ENCODE measurements at regions of chr13 and their contacts with region 1.

Region 1: GRCh38 chr13:31538067-31539042 is 201.0 kb upstream of the RXFP2 start:
- DNase-seq: peak in 1 of 2 experiments; percentile 44
- H3K4me3 ChIP-seq: no peak overlapping the region
- H3K4me3 Mint-ChIP-seq: no peak overlapping the region
- H3K27ac Mint-ChIP-seq: no peak overlapping the region
- H3K4me1 ChIP-seq: no peaks in the 10 kb centered on the region
- H3K4me1 Mint-ChIP-seq: no peaks in the 10 kb centered on the region
- H3K27me3 ChIP-seq: no peaks in the 10 kb centered on the region
- H3K27me3 Mint-ChIP-seq: no peaks in the 10 kb centered on the region
- CTCF ChIP-seq: peak; percentile 70 to 81

Region 2: DNA sequence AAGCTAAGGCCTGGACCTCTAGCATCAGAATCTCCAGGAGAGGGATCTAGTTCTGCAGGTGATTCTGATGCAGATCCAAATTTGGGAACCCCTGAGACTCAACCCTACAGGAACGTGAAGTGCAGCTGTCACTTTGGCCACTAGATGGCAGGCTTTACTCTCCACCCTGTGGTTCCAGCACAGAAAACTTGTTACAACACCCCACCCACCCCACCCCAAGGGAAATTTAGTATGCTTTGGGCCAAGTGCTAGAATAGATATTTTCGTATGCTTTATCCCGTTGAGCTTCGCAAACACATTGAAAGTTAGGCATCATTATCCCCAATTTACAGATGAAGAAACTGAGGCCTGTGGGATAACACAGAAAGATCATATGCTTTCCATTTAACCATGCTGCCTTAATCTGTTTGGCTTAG is 106.6 kb before region 1 on chr13:
- CTCF ChIA-PET with region 1: interaction called, 10 read pairs
- POLR2A ChIA-PET with region 1: no interaction called
- intact Hi-C with region 1: loop called (anchors 1 kb)
- DNase-seq: peak; percentile 63 to 67
- H3K4me3 ChIP-seq: no peak overlapping the region
- H3K4me3 Mint-ChIP-seq: no peak overlapping the region
- H3K27ac Mint-ChIP-seq: no peak overlapping the region
- H3K4me1 ChIP-seq: peaks cover 1% of the 10 kb centered on the region; the same call in 1 of the 2 replicates
- H3K4me1 Mint-ChIP-seq: peaks cover 1% of the 10 kb centered on the region
- H3K27me3 ChIP-seq: no peaks in the 10 kb centered on the region
- H3K27me3 Mint-ChIP-seq: peaks cover 3% of the 10 kb centered on the region
- CTCF ChIP-seq: peak; percentile 92 to 93

Region 3: DNA sequence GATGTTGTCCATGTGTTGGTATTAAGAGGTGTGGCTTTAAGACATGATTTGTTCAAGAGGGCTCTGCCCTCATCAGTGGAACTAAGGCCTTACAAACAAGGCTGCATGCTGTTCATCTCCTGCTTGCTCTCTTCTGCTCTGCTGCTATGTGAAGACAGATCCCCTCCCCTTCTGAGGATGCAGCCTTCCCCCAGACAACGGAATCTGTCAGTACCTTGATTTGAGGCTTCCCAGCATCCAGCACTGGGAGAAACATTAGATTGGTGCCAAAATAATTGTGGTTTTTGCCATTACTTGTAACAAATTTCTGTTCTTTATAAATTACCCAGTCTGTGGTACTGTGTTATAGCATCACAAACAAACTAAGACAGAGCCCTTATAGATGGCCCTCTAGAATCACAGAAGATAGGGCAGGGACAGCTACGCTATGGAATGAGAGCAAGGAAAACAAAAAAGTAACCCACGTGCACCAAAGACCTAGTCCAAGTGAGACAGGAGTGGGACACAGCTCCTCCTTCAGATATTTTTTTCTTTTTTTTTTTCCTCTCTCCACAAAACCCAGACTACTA is 49.4 kb after region 1 on chr13:
- CTCF ChIA-PET with region 1: interaction called, 8 read pairs
- POLR2A ChIA-PET with region 1: no interaction called
- intact Hi-C with region 1: loop called (anchors 1 kb)
- DNase-seq: peak in 1 of 2 experiments; percentile 15
- H3K4me3 ChIP-seq: no peak overlapping the region
- H3K4me3 Mint-ChIP-seq: peak overlapping the region; percentile 58
- H3K27ac Mint-ChIP-seq: peak overlapping the region; percentile 96
- H3K4me1 ChIP-seq: peaks cover 54% of the 10 kb centered on the region
- H3K4me1 Mint-ChIP-seq: peaks cover 28% of the 10 kb centered on the region
- H3K27me3 ChIP-seq: no peaks in the 10 kb centered on the region
- H3K27me3 Mint-ChIP-seq: no peaks in the 10 kb centered on the region
- CTCF ChIP-seq: no peak

Region 4: GRCh38 chr13:31605076-31605858 is 66.9 kb after region 1 on chr13:
- CTCF ChIA-PET with region 1: interaction called, 3 read pairs
- POLR2A ChIA-PET with region 1: no interaction called
- intact Hi-C with region 1: loop called (anchors 5 kb)
- DNase-seq: no peak
- H3K4me3 ChIP-seq: no peak overlapping the region
- H3K4me3 Mint-ChIP-seq: no peak overlapping the region
- H3K27ac Mint-ChIP-seq: no peak overlapping the region
- H3K4me1 ChIP-seq: no peaks in the 10 kb centered on the region
- H3K4me1 Mint-ChIP-seq: no peaks in the 10 kb centered on the region
- H3K27me3 ChIP-seq: no peaks in the 10 kb centered on the region
- H3K27me3 Mint-ChIP-seq: no peaks in the 10 kb centered on the region
- CTCF ChIP-seq: no peak

Region 5: DNA sequence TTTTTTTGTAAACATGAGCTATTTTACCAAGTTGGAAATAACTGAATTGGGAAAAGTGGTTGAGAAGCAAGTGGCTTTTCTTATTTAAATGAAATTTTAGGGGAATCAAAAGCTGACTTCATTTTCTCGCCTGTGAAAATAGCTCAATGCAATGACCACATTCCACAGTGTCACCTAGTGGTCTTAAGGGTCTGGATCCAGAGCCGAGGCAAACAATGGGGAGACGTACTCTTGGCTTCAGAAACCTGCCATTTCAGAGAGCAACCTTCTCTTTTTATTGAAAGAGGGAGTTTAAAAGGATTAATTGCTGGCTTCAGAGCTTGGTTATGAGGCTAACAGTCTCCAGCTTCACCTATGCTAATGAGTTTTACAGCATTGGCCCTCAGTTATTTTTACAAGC is 161.3 kb after region 1 on chr13:
- CTCF ChIA-PET with region 1: interaction called, 40 read pairs
- POLR2A ChIA-PET with region 1: no interaction called
- intact Hi-C with region 1: loop called (anchors 1 kb)
- DNase-seq: peak in 1 of 2 experiments; percentile 7
- H3K4me3 ChIP-seq: no peak overlapping the region
- H3K4me3 Mint-ChIP-seq: no peak overlapping the region
- H3K27ac Mint-ChIP-seq: no peak overlapping the region
- H3K4me1 ChIP-seq: no peaks in the 10 kb centered on the region
- H3K4me1 Mint-ChIP-seq: no peaks in the 10 kb centered on the region
- H3K27me3 ChIP-seq: no peaks in the 10 kb centered on the region
- H3K27me3 Mint-ChIP-seq: peaks cover 5% of the 10 kb centered on the region
- CTCF ChIP-seq: peak in 1 of 2 experiments; percentile 67

Measured in Caco-2 (cell line).